ENCODE measurements at regions of chr1 and their contacts with region 1.

Region 1: GRCh38 chr1:44213222-44214112 is at the start of gene DMAP1:
- DNase-seq: peak; percentile 80 to 94 (median 88)
- H3K4me3 ChIP-seq: peak within 1 kb of the TSS; percentile 0 to 90 (median 80)
- H3K27ac ChIP-seq: peak within 1 kb of the TSS in 3 of 5 donors; percentile 60 to 79 (median 72)
- H3K4me1 ChIP-seq: peaks cover 5 to 25% of the 10 kb centered on the region in 2 donors
- H3K27me3 ChIP-seq: no peaks in the 10 kb centered on the region
- CTCF ChIP-seq: peak in 3 of 6 experiments; percentile 23 to 31 (median 27)
- POLR2A ChIP-seq: peak; percentile 35 to 37
- total RNA-seq, gene DMAP1: 62.4 to 229 (median 73.5) TPM

Region 2: DNA sequence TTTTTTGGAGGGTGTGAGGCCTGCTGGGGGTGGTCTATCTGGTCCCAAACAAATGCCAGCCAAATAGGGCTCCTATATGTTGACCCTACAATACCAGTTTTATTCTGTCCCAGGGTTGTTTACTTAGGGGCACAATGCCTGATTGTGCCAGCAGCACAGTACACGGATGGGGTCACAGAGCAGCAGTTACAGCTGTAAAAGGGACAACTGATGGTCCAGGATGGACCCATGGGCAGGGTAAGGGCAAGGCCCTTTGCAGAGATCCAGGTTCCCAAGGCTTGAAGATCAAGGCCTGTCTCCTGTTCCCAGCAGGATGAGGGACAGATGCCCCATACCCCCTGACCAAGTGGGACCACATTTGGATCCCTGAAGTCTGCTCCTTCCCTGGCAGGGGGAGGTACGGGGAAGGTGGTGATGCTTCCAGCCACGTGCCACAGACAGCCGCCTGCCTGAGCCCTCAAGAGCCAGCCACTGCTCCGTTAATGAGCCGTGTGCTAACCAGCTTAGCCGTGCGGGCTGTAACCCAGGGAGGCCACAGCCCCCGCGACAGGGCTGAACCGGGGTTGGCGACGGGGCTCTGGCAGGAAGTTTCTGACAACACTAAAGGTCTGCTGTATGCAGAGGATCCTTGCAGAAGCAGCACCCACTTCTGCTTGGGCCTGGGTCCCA is 200.4 kb before region 1 on chr1:
- intact Hi-C with region 1: loop called in 1 of 2 experiments (anchors 10 kb)
- DNase-seq: no peak
- H3K4me3 ChIP-seq: no peak overlapping the region
- H3K27ac ChIP-seq: no peak overlapping the region
- H3K4me1 ChIP-seq: no peaks in the 10 kb centered on the region
- H3K27me3 ChIP-seq: no peaks in the 10 kb centered on the region
- CTCF ChIP-seq: no peak
- POLR2A ChIP-seq: no peak

Region 3: GRCh38 chr1:44318097-44319088 is 104.9 kb after region 1 on chr1:
- intact Hi-C with region 1: loop called in 1 of 2 experiments (anchors 5 kb)
- DNase-seq: peak in 6 of 7 donors; percentile 25 to 67 (median 42)
- H3K4me3 ChIP-seq: no peak overlapping the region
- H3K27ac ChIP-seq: no peak overlapping the region
- H3K4me1 ChIP-seq: no peaks in the 10 kb centered on the region
- H3K27me3 ChIP-seq: no peaks in the 10 kb centered on the region
- CTCF ChIP-seq: peak; percentile 55 to 93 (median 73)
- POLR2A ChIP-seq: no peak